Dendritic cell treated with granulocyte-macrophage colony-stimulating factor and Interleukin-4, amounts not matched to agents 40 ng/mL and 50 ng/mL, for 4 days (primary cell): ENCODE measurements at regions of chr7 and their contacts with region 1.

Region 1: DNA sequence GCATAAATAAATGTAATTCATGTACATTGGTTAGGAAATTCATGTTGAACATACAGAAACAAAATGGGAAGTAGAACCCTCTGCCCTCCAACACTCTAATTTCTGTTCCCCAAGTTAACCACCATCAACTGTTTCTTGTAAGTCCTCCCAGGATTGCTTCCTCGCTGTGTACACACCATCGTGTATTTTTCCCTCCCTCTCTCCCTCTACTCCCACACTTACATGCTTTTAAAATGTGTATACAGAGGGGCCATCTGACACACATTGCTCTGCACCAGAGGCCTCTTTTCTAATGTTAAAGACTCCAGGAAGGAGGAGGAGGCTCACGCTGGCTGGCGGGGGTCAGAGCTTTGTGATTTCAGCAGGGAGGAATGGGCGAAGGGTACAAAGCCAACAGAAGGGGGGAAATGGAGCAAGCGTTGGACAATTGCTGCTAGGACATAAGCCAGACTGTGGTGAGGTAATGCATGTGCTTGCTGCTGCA is 1.9 kb upstream of the EPHA1 start:
- H3K4me3 Mint-ChIP-seq: peak overlapping the region; percentile 61
- H3K27ac Mint-ChIP-seq: peak overlapping the region; percentile 88
- H3K4me1 Mint-ChIP-seq: peaks cover 88% of the 10 kb centered on the region
- H3K27me3 Mint-ChIP-seq: peaks cover 8% of the 10 kb centered on the region

Region 2: DNA sequence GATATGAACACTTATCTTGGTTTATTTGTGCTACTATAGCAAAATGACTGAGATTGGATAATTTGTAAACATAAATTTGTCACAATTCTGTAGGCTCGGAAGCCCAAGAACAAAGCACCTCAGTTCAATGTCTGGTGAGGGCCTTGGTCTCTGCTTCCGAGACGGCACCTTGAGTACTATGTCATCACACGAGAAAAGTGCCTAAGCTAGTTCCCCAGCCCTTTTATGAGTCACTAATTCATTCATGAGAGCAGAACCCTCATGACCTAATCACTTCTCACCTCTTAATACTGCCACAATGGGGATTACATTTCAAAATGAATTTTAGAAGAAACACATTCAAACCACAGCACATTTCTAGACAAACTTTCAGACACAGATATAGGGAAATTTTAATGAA is 713.3 kb before region 1 on chr7:
- intact Hi-C with region 1: no loop called
- H3K4me3 Mint-ChIP-seq: no peak overlapping the region
- H3K27ac Mint-ChIP-seq: no peak overlapping the region
- H3K4me1 Mint-ChIP-seq: no peaks in the 10 kb centered on the region
- H3K27me3 Mint-ChIP-seq: peaks cover 3% of the 10 kb centered on the region

Region 3: GRCh38 chr7:143380255-143380645 is 30.3 kb before region 1 on chr7:
- intact Hi-C with region 1: loop called (anchors 2 kb)
- H3K4me3 Mint-ChIP-seq: no peak overlapping the region
- H3K27ac Mint-ChIP-seq: peak overlapping the region; percentile 93
- H3K4me1 Mint-ChIP-seq: peaks cover 55% of the 10 kb centered on the region
- H3K27me3 Mint-ChIP-seq: no peaks in the 10 kb centered on the region

Region 4: GRCh38 chr7:143958781-143959180 is 548.2 kb after region 1 on chr7:
- intact Hi-C with region 1: no loop called
- H3K4me3 Mint-ChIP-seq: no peak overlapping the region
- H3K27ac Mint-ChIP-seq: no peak overlapping the region
- H3K4me1 Mint-ChIP-seq: no peaks in the 10 kb centered on the region
- H3K27me3 Mint-ChIP-seq: peaks cover 5% of the 10 kb centered on the region